PC-9 (cell line): ENCODE measurements at regions of chr18 and their contacts with region 1.

Region 1: DNA sequence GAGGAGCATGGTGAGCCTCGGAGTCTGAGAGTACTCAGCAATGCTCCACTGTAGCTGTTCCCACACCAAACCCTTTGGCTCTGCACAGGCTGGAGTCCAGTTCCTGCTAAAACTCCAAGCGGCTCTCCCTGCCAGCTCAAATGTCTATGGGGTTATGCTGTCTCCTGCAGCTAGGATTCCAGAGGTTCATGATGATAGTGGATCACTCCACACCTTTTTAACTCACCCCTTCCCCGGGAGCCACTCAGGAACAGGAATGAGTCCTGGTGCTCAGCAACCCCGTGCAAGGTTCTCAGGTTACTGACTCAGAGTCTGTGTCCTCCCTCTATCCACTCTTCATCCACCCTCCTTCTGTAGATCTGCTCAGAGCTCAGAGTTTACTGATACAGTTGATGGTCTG is 410.0 kb downstream of the CDH19 start:
- DNase-seq: no peak
- H3K4me3 ChIP-seq: no peak overlapping the region
- H3K27ac ChIP-seq: no peak overlapping the region
- H3K4me1 ChIP-seq: no peaks in the 10 kb centered on the region
- H3K27me3 ChIP-seq: no peaks in the 10 kb centered on the region
- CTCF ChIP-seq: no peak

Region 2: GRCh38 chr18:65706646-65707045 is 487.3 kb before region 1 on chr18:
- CTCF ChIA-PET with region 1: no interaction called
- POLR2A ChIA-PET with region 1: interaction called, 19 read pairs
- intact Hi-C with region 1: no loop called
- DNase-seq: no peak
- H3K4me3 ChIP-seq: no peak overlapping the region
- H3K27ac ChIP-seq: no peak overlapping the region
- H3K4me1 ChIP-seq: no peaks in the 10 kb centered on the region
- H3K27me3 ChIP-seq: no peaks in the 10 kb centered on the region
- CTCF ChIP-seq: no peak

Region 3: DNA sequence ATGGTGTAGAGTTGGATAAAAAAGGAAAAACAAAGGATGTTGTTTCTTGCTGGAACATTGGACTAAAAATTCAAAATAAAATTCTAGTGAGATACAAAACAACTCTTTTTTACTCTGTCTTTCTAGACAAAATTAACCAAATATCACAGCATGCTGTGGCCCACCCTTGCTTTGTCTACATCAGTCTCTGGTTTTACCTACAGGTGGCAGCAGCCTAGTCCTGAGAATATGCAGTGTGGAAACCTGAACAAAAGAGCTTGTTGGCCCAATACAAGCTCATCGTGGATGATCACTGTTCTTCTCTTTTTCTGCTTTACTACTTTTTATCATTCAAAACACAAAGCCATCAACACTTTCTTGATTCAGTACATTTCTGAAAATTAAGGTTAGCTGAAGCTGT is 199.5 kb after region 1 on chr18:
- CTCF ChIA-PET with region 1: no interaction called
- POLR2A ChIA-PET with region 1: no interaction called
- intact Hi-C with region 1: no loop called
- DNase-seq: no peak
- H3K4me3 ChIP-seq: no peak overlapping the region
- H3K27ac ChIP-seq: no peak overlapping the region
- H3K4me1 ChIP-seq: no peaks in the 10 kb centered on the region
- H3K27me3 ChIP-seq: no peaks in the 10 kb centered on the region
- CTCF ChIP-seq: no peak